Caco-2 (cell line): ENCODE measurements at regions of chr5 and their contacts with region 1.

Region 1: GRCh38 chr5:138128334-138128733 is 10.9 kb downstream of the NME5 start:
- DNase-seq: no peak
- H3K4me3 ChIP-seq: no peak overlapping the region
- H3K4me3 Mint-ChIP-seq: no peak overlapping the region
- H3K27ac Mint-ChIP-seq: no peak overlapping the region
- H3K4me1 ChIP-seq: 0 out of 2 replicates have a peak, but pooled peaks cover 6% of the 10 kb centered on the region
- H3K4me1 Mint-ChIP-seq: peaks cover 5% of the 10 kb centered on the region
- H3K27me3 ChIP-seq: no peaks in the 10 kb centered on the region
- H3K27me3 Mint-ChIP-seq: no peaks in the 10 kb centered on the region
- CTCF ChIP-seq: no peak

Region 2: GRCh38 chr5:138077065-138077696 is 51.2 kb before region 1 on chr5:
- CTCF ChIA-PET with region 1: interaction called, 24 read pairs
- POLR2A ChIA-PET with region 1: no interaction called
- intact Hi-C with region 1: loop called (anchors 1 kb)
- DNase-seq: peak; percentile 67 to 75
- H3K4me3 ChIP-seq: no peak overlapping the region
- H3K4me3 Mint-ChIP-seq: no peak overlapping the region
- H3K27ac Mint-ChIP-seq: no peak overlapping the region
- H3K4me1 ChIP-seq: peaks cover 21% of the 10 kb centered on the region
- H3K4me1 Mint-ChIP-seq: peaks cover 16% of the 10 kb centered on the region
- H3K27me3 ChIP-seq: no peaks in the 10 kb centered on the region
- H3K27me3 Mint-ChIP-seq: no peaks in the 10 kb centered on the region
- CTCF ChIP-seq: peak; percentile 79 to 88

Region 3: DNA sequence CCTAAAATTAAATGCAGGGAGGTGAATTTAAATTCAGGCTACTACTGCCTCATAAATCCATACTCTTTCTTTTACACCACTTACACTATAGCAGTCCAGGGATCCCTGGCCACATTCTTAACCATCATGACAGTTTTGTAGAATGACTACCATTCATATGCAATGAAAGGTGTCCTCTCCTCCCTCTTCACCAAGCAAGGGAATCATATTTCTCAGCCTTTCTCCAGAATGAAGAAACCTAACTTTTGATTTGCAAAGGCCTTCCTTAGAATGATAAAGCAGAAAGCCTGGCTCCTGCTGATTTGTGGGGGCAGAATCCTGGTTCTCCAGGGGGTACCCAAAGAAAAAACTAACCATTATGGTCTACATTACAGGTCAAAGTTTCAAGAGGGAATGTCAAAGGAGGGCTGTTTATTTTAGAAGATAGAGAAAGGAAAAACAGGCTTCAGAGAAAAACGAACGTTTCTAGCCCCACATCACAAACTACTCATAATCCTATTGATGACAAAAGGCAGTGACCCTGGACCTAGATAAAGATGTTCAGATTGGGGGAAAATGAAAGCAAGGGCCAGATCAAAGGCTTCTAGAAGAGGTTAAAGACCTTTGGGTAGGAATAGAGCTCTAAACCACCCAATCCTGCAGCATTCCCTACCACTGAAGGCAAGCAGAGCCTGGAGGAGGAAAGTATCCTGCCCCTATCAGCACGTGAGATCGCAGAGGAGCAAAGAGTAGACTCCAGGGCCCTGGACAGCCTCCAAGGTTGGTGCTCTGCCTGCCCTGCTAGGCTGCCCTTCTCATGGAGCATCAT is 33.0 kb before region 1 on chr5:
- CTCF ChIA-PET with region 1: interaction called, 4 read pairs
- POLR2A ChIA-PET with region 1: no interaction called
- intact Hi-C with region 1: loop called (anchors 1 kb)
- DNase-seq: peak; percentile 82 to 86
- H3K4me3 ChIP-seq: no peak overlapping the region
- H3K4me3 Mint-ChIP-seq: peak overlapping the region; percentile 57
- H3K27ac Mint-ChIP-seq: peak overlapping the region; percentile 27
- H3K4me1 ChIP-seq: peaks cover 59% of the 10 kb centered on the region
- H3K4me1 Mint-ChIP-seq: peaks cover 44% of the 10 kb centered on the region
- H3K27me3 ChIP-seq: no peaks in the 10 kb centered on the region
- H3K27me3 Mint-ChIP-seq: no peaks in the 10 kb centered on the region
- CTCF ChIP-seq: no peak